OCI-LY7 (cell line): ENCODE measurements at regions of chr11 and their contacts with region 1.

Region 1: DNA sequence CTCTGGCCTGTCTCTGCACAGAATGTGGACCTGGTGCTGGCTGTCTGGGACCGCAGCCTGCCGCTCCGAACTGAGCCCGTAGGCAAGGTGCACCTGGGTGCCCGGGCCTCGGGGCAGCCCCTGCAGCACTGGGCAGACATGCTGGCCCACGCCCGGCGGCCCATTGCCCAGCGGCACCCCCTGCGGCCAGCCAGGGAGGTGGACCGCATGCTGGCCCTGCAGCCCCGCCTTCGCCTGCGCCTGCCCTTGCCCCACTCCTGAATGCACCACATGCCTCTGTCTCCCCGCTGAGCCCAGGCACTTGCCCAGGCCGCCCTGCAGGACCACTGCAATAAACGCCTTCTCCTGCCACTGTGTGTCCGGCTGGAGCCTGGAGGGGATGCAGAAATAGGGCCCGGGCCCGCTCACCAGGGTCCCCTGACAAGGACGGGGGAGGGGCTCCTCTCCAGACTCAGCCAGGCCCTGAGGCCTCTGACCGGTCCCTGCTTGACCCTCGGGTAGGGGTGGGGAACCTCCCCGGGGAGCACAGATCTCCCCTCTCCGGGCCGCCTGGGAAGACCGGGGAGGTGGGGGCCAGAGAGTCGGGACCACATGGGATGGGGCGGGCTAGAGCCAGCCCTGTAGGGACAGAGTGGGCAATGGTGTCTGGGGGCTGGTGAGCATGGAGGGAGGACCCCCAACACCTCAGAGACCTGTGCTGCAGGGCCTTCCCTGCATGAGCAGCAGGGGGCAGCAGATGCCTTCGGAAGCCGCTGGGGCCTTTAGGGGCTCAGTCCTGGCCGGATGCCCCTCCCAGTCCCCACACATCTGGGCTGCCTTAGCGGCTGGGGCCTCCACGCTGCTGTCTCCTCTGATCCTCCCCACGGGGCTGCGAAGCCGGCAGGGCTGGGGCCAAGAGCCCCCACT is 1.4 kb upstream of the TNNI2 start:
- DNase-seq: peak; percentile 88
- H3K4me3 ChIP-seq: no peak overlapping the region
- H3K27ac ChIP-seq: no peak overlapping the region
- H3K4me1 ChIP-seq: peaks cover 33% of the 10 kb centered on the region
- CTCF ChIP-seq: peak; percentile 86

Region 2: GRCh38 chr11:1852877-1853276 is 15.5 kb after region 1 on chr11 and contains the start of gene LSP1:
- CTCF ChIA-PET with region 1: interaction called, 10 read pairs
- POLR2A ChIA-PET with region 1: interaction called, 4 read pairs
- intact Hi-C with region 1: loop called (anchors 1 kb)
- DNase-seq: peak; percentile 96
- H3K4me3 ChIP-seq: peak within 1 kb of the TSS; percentile 93
- H3K27ac ChIP-seq: peak within 1 kb of the TSS; percentile 96
- H3K4me1 ChIP-seq: peaks cover 53% of the 10 kb centered on the region
- CTCF ChIP-seq: no peak
- total RNA-seq, gene LSP1: 195 and 232 TPM in 2 replicates

Region 3: GRCh38 chr11:1882519-1883238 is 45.3 kb after region 1 on chr11:
- CTCF ChIA-PET with region 1: no interaction called
- POLR2A ChIA-PET with region 1: no interaction called
- intact Hi-C with region 1: loop called (anchors 1 kb)
- DNase-seq: peak; percentile 80
- H3K4me3 ChIP-seq: no peak overlapping the region
- H3K27ac ChIP-seq: peak overlapping the region; percentile 48
- H3K4me1 ChIP-seq: peaks cover 21% of the 10 kb centered on the region
- CTCF ChIP-seq: peak; percentile 91

Region 4: DNA sequence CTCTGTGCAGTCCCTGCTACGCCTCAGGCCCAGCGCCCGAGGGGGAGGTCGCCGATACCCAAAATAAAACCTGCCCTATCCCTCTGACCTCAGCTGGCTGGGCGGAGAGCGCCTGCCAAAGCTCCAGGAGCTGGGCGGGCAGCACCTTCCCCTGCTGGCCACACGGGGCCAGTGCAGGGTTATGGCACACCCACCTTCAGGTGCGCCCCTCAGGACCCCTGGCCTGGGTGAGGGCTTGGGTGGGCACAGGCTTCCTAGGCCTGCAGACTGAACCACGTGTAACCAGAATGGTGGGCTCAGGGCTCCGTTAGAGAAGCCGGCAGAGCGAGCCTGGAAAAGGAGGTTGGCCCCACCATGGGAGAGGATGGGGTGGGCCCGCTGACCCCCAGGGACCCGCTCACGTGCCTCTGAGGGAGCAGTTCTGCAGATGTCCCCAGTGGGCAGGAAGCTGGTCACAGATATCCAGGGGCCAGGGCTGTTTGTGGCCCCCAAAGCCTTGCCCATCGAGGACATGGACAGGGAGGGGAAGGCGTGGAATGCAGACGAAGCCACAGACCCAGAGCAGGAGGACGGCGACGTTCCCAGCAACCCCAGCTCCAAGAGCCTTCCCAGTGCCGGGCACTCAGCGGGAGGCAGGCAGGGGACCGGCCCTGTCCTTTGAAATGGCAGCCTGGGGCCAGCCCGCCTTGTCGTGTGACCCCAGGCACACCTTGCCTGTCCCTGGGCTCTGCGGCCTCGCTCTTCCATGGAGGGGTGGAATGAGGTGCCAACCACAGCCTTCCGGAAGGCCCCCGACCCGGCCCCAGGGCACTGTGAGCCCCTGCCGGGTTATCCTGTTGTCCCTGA is 80.5 kb after region 1 on chr11:
- CTCF ChIA-PET with region 1: no interaction called
- POLR2A ChIA-PET with region 1: interaction called, 3 read pairs
- intact Hi-C with region 1: loop called (anchors 1 kb)
- DNase-seq: no peak
- H3K4me3 ChIP-seq: no peak overlapping the region
- H3K27ac ChIP-seq: no peak overlapping the region
- H3K4me1 ChIP-seq: no peaks in the 10 kb centered on the region
- CTCF ChIP-seq: no peak; the same call in 1 of the 2 replicates

Region 5: GRCh38 chr11:2151500-2152257 is 314.3 kb after region 1 on chr11:
- CTCF ChIA-PET with region 1: no interaction called
- POLR2A ChIA-PET with region 1: no interaction called
- intact Hi-C with region 1: loop called (anchors 1 kb)
- DNase-seq: peak; percentile 80
- H3K4me3 ChIP-seq: no peak overlapping the region
- H3K27ac ChIP-seq: no peak overlapping the region
- H3K4me1 ChIP-seq: peaks cover 4% of the 10 kb centered on the region
- CTCF ChIP-seq: peak; percentile 76